Vagina (tissue), 2 donors: ENCODE measurements at regions of chr6 and their contacts with region 1.

Region 1: GRCh38 chr6:36759148-36759759 is 61.6 kb downstream of the RAB44 start:
- DNase-seq: no peak
- H3K4me3 ChIP-seq: no peak overlapping the region
- H3K27ac ChIP-seq: no peak overlapping the region
- H3K4me1 ChIP-seq: peaks cover 16% of the 10 kb centered on the region
- H3K27me3 ChIP-seq: no peaks in the 10 kb centered on the region
- CTCF ChIP-seq: peak; percentile 92 to 97 (median 93)
- POLR2A ChIP-seq: no peak

Region 2: GRCh38 chr6:36423101-36423824 is 336.0 kb before region 1 on chr6:
- intact Hi-C with region 1: loop called (anchors 10 kb)
- DNase-seq: peak in 1 of 2 donors; percentile 95
- H3K4me3 ChIP-seq: peak overlapping the region; percentile 50 to 56
- H3K27ac ChIP-seq: peak overlapping the region; percentile 81
- H3K4me1 ChIP-seq: peaks cover 5% of the 10 kb centered on the region
- H3K27me3 ChIP-seq: no peaks in the 10 kb centered on the region
- CTCF ChIP-seq: peak in 2 of 3 experiments; percentile 36 to 48
- POLR2A ChIP-seq: peak in 1 of 2 donors; percentile 18

Region 3: GRCh38 chr6:36615018-36615761 is 144.1 kb before region 1 on chr6:
- intact Hi-C with region 1: loop called (anchors 5 kb)
- DNase-seq: no peak
- H3K4me3 ChIP-seq: no peak overlapping the region
- H3K27ac ChIP-seq: no peak overlapping the region
- H3K4me1 ChIP-seq: peaks cover 14% of the 10 kb centered on the region
- H3K27me3 ChIP-seq: no peaks in the 10 kb centered on the region
- CTCF ChIP-seq: peak; percentile 29 to 60 (median 35)
- POLR2A ChIP-seq: no peak